GM10248 (cell line): ENCODE measurements at regions of chr10 and their contacts with region 1.

Region 1: DNA sequence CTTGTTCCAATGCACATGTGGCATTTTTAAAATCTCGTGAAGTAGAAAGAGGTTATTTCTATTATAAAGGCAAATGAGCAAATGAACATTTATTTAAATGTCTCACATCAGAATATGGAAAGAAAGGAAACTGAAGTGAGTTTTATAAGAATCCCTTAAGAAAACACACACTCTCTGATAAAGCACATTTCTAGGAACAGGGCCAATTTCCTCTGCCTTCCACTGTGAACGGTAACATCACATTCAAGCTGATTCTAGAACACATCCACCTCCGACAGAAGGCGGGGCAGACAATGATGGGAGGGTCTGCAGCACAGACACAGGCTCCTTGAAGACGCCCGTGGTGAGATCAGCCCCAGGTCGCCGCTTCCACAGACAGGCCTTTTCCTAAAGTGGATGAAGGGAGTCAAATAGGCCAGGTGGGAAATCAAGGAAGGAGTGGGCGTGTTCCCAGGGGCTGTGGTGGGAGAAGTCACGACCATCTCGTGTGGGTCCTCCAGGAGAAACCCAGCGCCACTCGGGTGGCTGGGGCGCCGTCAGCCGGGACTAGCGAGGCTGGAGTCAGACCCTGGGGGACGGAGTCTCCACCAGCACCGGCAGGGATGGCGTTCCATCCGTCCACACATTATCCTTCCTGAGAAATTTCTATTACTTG is 31.1 kb downstream of the PITRM1 start:
- DNase-seq: no peak
- CTCF ChIP-seq: no peak

Region 2: DNA sequence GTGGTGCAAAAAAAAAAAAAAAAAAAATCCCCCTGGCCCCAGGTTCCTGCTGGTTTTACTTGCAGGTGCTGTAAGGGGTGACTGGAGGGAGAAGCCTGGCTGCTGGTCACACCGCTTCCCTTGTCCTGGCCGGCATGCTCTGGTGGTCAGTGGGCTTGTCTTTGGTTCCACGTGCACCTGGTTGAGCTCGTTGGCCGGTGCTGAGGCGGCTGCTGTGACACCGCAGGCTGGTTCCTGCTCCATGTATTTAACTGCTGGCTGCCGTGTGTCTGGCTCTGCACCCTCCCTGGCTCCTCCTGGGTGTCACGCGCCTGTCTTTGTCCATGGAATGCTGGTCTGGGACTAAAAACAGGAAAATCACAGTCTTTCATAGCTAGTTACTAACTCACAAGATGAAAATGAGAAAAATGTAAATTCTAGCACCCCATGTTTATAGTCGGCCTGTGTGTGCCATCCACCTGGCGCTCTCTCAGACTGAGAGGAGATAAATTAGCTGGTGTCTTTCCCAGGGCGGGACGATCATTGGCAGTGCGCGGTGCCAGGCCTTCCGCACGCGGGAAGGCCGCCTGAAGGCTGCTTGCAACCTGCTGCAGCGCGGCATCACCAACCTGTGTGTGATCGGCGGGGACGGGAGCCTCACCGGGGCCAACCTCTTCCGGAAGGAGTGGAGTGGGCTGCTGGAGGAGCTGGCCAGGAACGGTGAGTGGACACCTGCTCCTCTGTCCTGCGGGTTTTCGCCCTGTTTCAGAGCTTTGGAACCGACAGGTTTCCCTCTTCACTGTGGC is 40.4 kb before region 1 on chr10:
- CTCF ChIA-PET with region 1: no interaction called
- POLR2A ChIA-PET with region 1: interaction called, 11 read pairs
- DNase-seq: no peak
- CTCF ChIP-seq: no peak